Activated B cell treated with CpG ODN at 0.5 μM for 24 hours (primary cell): ENCODE measurements at regions of chr10 and their contacts with region 1.

Region 1: DNA sequence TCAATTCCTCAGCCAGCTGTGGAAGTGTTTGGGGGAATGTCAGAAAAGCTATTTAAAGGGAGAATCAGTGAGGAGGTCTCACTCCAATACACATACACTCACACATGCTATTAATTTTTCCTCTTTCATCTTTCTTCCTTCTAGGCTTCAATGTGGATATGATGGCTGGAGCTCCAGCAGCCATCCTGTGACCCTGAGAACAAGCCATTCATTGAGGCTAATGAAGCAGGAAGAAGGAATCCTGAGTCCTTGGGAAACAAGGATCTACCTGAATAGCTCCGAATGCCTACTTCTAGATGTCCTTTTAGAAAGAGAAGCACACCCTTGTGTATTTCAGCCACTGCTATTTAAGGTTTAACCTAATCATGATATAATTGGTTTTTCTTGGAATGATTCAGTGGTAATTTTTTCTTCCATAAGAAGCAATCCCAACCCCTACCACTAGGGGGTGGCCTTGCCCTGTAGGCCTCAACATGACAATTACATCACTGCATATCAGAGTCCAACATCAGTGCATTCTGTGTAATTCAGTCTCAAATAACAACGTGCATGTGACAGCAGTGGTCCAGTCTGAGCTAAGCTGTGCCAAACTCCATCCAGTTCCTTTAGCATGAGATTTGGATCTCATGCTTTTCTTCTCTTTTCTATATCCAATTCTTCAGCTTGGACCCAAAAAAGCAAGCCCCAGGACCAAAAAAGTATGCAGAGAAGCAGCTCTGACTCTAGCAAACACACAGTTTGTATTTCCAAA is 85.3 kb upstream of the ANKRD1 start:
- DNase-seq: no peak
- ATAC-seq: peak; percentile 73
- H3K4me3 Mint-ChIP-seq: peak overlapping the region; percentile 74
- H3K27ac Mint-ChIP-seq: peak overlapping the region; percentile 91
- H3K4me1 Mint-ChIP-seq: peaks cover 75% of the 10 kb centered on the region
- H3K27me3 Mint-ChIP-seq: no peaks in the 10 kb centered on the region
- CTCF ChIP-seq: peak; percentile 80

Region 2: DNA sequence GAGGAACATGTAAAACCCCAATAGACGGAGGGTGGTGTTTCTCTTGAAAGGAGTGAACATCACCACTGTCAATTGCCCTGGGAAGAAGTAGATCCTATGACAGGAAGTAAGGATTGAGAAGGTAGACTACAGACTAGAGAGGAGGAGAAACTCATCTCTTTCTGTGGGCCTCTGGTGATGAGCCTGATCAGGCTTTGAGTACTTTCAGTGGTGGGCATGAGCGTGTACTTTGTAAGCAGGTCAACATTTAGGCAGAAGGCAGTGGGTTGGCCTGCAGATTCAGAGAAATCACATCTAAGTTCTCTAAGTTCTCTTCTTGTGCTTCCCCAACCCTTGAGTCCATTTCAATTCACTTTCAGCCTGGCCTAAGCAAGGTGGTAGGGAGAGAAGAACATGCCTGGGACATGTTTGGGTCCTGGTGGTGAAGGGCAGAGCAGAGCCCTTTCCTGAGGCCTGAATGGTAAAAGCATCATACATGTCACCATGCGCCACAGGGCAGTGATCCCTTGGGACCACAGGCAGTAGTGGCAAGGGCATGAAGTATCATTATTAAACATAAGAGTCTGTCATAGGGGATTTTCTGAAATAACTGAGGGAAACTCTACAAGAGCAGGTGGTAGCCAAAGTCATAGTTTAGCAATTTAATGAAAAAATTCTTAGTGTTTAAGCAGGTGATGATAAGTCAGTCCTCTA is 28.9 kb before region 1 on chr10:
- CTCF ChIA-PET with region 1: interaction called, 8 read pairs
- POLR2A ChIA-PET with region 1: interaction called, 22 read pairs
- intact Hi-C with region 1: loop called (anchors 1 kb)
- DNase-seq: peak; percentile 48
- ATAC-seq: peak; percentile 94
- H3K4me3 Mint-ChIP-seq: peak overlapping the region; percentile 46
- H3K27ac Mint-ChIP-seq: peak overlapping the region; percentile 86
- H3K4me1 Mint-ChIP-seq: peaks cover 38% of the 10 kb centered on the region
- H3K27me3 Mint-ChIP-seq: no peaks in the 10 kb centered on the region
- CTCF ChIP-seq: no peak

Region 3: GRCh38 chr10:91088300-91089140 is 82.3 kb after region 1 on chr10:
- CTCF ChIA-PET with region 1: interaction called, 24 read pairs
- POLR2A ChIA-PET with region 1: interaction called, 4 read pairs
- intact Hi-C with region 1: loop called (anchors 1 kb)
- DNase-seq: no peak
- ATAC-seq: peak; percentile 69
- H3K4me3 Mint-ChIP-seq: no peak overlapping the region
- H3K27ac Mint-ChIP-seq: no peak overlapping the region
- H3K4me1 Mint-ChIP-seq: peaks cover 6% of the 10 kb centered on the region
- H3K27me3 Mint-ChIP-seq: no peaks in the 10 kb centered on the region
- CTCF ChIP-seq: no peak

Region 4: DNA sequence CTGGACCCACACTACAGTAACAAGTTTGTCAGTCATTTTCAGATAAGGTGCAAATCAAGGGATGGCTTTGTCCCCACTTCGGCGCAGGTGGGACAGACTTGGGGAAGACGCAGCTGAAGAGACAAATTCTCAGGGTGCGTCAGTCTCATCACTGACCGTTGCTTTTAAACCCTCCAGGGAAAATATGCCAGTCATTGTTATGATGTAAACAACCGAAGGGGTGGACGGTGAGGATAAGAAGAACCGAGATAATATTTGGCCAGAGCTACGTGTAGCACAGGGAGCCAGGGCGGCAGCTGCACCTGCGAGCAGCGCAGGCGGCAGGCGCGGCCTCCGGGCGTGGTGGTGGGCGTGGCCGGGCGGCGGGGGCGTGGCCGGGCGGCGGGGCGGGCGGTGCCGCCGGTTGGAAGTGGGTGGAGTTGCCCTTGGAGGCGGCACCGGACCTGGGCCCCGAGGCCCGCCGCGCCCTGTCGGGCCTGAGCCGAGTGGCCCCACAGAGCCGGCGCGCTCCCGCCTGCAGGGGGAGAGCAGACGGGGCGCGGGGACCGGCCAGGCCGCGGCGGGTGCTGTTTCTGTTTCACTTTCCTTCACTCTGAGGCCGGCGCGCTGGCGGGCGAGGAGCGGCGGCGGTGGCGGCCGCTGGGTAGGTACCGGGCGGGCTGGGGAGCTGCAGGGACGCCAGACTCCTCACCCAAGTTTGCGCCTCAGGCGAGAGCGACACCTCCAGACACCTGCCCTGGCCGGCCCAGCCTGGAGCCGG is 214.2 kb after region 1 on chr10 and contains the start of gene PCGF5:
- CTCF ChIA-PET with region 1: interaction called, 10 read pairs
- POLR2A ChIA-PET with region 1: no interaction called
- intact Hi-C with region 1: loop called (anchors 1 kb)
- DNase-seq: peak; percentile 97
- ATAC-seq: peak; percentile 96
- H3K4me3 Mint-ChIP-seq: peak within 1 kb of the TSS; percentile 93
- H3K27ac Mint-ChIP-seq: peak within 1 kb of the TSS; percentile 91
- H3K4me1 Mint-ChIP-seq: peaks cover 68% of the 10 kb centered on the region
- H3K27me3 Mint-ChIP-seq: no peaks in the 10 kb centered on the region
- CTCF ChIP-seq: no peak
- total RNA-seq, gene PCGF5: 70.2 and 72.9 TPM in 2 replicates

Region 5: DNA sequence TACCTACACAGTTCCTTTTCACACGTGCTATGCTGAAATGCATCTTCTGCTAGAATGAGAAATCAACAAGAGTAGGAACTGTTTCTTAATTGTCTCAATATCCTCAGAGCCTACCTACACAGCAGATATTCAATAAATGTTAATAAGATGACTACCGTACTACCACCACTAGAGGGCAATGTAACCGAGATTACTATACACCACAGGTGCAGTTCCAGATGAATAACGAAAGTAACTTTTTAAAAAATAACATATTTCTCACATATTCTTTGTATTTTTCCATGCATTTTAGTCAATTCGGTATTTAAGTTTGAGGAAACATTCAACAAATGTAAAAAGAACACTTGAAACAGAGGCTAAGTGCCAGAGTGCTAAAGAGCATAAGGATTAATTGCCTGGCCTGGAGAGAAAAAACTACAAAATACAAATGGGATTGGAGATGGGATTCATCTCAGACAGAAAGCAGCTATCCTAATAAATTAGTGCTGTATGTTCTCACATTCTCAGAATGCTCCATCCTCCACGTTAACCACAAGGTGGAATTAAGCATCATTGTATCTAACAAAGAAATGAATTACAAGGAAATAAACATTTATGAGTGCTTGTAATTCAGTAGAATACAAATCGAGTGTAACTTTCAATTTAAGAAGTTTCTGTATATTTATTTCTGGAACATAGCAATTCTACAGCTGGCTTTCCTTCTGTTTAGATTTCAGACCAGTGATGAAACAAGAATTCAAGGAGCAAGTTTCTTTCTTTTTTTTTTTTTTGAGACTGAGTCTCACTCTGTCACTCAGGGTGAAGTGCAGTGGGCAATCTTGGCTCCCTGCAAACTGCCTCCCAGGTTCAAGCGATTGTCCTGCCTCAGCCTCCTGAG is 383.7 kb after region 1 on chr10:
- CTCF ChIA-PET with region 1: interaction called, 3 read pairs
- POLR2A ChIA-PET with region 1: no interaction called
- intact Hi-C with region 1: loop called (anchors 2 kb)
- DNase-seq: no peak
- ATAC-seq: peak; percentile 91
- H3K4me3 Mint-ChIP-seq: no peak overlapping the region
- H3K27ac Mint-ChIP-seq: no peak overlapping the region
- H3K4me1 Mint-ChIP-seq: peaks cover 3% of the 10 kb centered on the region
- H3K27me3 Mint-ChIP-seq: peaks cover 13% of the 10 kb centered on the region
- CTCF ChIP-seq: peak; percentile 73

Region 6: DNA sequence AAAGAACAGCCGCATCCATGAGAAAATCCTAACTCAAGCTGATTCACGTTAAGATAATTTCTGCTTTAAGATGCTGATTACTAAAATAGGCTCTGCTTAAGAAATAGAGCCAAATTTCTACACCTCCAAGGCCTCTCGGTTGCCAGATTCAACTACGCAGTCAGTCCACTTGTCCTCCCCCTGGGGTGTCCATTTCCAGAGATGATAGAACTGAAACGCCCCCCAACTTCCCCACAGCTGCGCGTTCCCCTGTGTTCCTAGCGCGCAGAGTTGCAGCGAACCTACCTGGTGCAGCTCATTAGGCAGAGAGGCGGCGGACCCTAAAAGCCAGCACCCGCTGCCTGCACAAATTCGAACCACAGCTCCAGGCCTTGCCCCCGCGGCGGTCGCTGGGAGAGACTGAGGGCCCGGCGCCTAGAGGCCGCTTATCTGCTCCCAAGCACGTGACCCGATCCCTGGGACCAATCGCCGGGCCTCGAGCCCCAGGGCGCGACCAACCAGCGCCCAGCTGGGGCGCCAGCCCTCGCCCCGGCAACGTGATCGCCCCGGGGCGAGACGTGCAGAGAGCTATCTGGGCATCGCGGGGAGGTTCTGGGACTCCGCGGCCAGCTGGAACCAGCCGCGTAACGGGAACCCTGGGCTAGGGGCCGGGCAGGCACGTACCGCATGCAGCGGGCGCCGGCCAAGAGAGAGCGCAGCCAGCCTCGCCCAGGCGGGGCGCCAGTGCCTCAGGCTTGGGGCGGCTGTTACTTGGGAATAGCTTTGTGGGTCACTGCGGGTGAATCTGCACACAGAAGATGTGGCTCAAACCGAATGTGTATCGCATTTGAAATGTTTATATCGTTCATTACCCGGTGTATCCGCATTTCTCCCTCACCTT is 626.7 kb after region 1 on chr10 and contains the start of gene PPP1R3C:
- CTCF ChIA-PET with region 1: no interaction called
- POLR2A ChIA-PET with region 1: no interaction called
- intact Hi-C with region 1: loop called (anchors 1 kb)
- DNase-seq: peak; percentile 32
- ATAC-seq: peak; percentile 74
- H3K4me3 Mint-ChIP-seq: peak within 1 kb of the TSS; percentile 75
- H3K27ac Mint-ChIP-seq: no peak within 1 kb of the TSS
- H3K4me1 Mint-ChIP-seq: peaks cover 14% of the 10 kb centered on the region
- H3K27me3 Mint-ChIP-seq: peaks cover 46% of the 10 kb centered on the region
- CTCF ChIP-seq: no peak
- total RNA-seq, gene PPP1R3C: not detected in 2 replicates